Activated CD4-positive, alpha-beta T cell treated with anti-CD3 and anti-CD28 coated beads for 36 hours (primary cell): ENCODE measurements at regions of chr22 and their contacts with region 1.

Region 1: DNA sequence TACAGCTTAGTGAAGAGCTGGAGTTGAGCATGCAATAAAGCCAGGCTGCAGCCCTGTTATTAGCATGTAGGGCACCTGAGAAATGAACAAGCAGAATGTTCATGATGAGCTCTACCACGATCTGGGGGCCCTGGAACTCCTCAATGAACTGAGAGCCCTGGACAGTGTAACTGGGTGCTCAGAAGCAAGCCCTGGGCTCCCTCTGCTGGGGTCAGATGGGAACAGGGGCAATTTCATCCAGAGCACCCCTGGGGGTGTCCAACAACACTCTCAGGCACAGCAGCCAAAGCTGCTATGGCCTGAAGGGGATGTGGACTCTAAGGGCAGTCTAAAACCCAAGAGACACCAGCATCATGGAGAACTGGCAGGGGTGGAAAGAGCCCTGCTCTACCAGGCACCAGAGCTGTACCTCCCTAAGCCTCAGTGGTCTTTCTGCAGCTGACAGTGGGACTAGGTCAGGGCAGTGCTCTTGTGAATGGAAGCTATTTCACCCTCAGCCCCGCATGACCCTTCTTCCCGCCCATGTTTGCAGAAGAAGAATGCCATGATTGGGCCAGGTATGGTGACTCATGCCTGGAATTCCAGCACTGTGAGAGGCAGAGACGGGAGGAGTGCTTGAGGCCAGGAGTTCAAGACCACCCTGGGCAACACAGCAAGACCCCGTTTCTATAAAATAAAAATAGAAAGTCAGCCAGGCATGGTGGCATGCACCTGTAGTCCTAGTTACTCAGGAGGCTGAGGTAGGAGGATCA is 28.9 kb downstream of the THOC5 start:
- DNase-seq: peak; percentile 40
- ATAC-seq: peak; percentile 36
- H3K4me3 Mint-ChIP-seq: no peak overlapping the region
- H3K27ac Mint-ChIP-seq: no peak overlapping the region
- H3K4me1 Mint-ChIP-seq: no peaks in the 10 kb centered on the region
- H3K27me3 Mint-ChIP-seq: no peaks in the 10 kb centered on the region

Region 2: DNA sequence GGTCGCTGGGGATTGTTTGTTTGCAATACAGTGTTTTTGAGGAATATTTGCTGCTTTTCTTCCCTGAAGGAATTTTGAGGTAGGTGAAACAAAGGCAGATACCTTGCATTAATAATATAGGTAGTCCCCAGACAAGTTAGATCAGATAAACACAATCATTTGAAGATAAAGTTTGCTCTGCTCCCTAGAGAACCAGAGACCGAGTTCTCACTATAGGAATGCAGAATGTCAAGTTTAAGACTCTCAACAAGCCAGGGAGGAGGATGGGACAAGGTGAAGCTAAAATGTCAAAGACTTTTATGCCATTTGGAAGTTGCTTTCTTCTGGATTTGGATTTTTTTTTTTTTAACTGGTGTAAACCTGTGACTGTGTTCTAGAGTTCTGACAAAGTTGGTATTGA is 1209.7 kb before region 1 on chr22:
- CTCF ChIA-PET with region 1: no interaction called
- POLR2A ChIA-PET with region 1: no interaction called
- intact Hi-C with region 1: no loop called
- DNase-seq: no peak
- ATAC-seq: no peak
- H3K4me3 Mint-ChIP-seq: no peak overlapping the region
- H3K27ac Mint-ChIP-seq: no peak overlapping the region
- H3K4me1 Mint-ChIP-seq: no peaks in the 10 kb centered on the region
- H3K27me3 Mint-ChIP-seq: no peaks in the 10 kb centered on the region

Region 3: GRCh38 chr22:29394931-29395581 is 129.6 kb before region 1 on chr22:
- CTCF ChIA-PET with region 1: interaction called, 3 read pairs
- POLR2A ChIA-PET with region 1: no interaction called
- intact Hi-C with region 1: loop called (anchors 1 to 10 kb)
- DNase-seq: peak; percentile 82
- ATAC-seq: peak; percentile 97
- H3K4me3 Mint-ChIP-seq: no peak overlapping the region
- H3K27ac Mint-ChIP-seq: no peak overlapping the region
- H3K4me1 Mint-ChIP-seq: peaks cover 2% of the 10 kb centered on the region
- H3K27me3 Mint-ChIP-seq: no peaks in the 10 kb centered on the region

Region 4: GRCh38 chr22:29541845-29542244 is 17.2 kb after region 1 on chr22:
- CTCF ChIA-PET with region 1: no interaction called
- POLR2A ChIA-PET with region 1: no interaction called
- intact Hi-C with region 1: no loop called
- DNase-seq: no peak
- ATAC-seq: no peak
- H3K4me3 Mint-ChIP-seq: no peak overlapping the region
- H3K27ac Mint-ChIP-seq: no peak overlapping the region
- H3K4me1 Mint-ChIP-seq: no peaks in the 10 kb centered on the region
- H3K27me3 Mint-ChIP-seq: no peaks in the 10 kb centered on the region